Kidney (tissue), 22 donors: ENCODE measurements at regions of chr19 and their contacts with region 1.

Region 1: GRCh38 chr19:15264061-15264932 is 32.0 kb upstream of the EPHX3 start:
- DNase-seq: peak; percentile 74 to 91 (median 80)
- H3K4me3 ChIP-seq: no peak overlapping the region
- H3K27ac ChIP-seq: peak overlapping the region; percentile 33 to 72
- H3K4me1 ChIP-seq: peaks cover 0 to 15% (median 11%) of the 10 kb centered on the region in 3 donors
- H3K27me3 ChIP-seq: no peaks in the 10 kb centered on the region
- CTCF ChIP-seq: peak; percentile 77

Region 2: GRCh38 chr19:15136246-15136954 is 127.9 kb before region 1 on chr19:
- intact Hi-C with region 1: no loop called
- DNase-seq: no peak
- H3K4me3 ChIP-seq: no peak overlapping the region
- H3K27ac ChIP-seq: no peak overlapping the region
- H3K4me1 ChIP-seq: no peaks in the 10 kb centered on the region
- H3K27me3 ChIP-seq: no peaks in the 10 kb centered on the region
- CTCF ChIP-seq: no peak

Region 3: DNA sequence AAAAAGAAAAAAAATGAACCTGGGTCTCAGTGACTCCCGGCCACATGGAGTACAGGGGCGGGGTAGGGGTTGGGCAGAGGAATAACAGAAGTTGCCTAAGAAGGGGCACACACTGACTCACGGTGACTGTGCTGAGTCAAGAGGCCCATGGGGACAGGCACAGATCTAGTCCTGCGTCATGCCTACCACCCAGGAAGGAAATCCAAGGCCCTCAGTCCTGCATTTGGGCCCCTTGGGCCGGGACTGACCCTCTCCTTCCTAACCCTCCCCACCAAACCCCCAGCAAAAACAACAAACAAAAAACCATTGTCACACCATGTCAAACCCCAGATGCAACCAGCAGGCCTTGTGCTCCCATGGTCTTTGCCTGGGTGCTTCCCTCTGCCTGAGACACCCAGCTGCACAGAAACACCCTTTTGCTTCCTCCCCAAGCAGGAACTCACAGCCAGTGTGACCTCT is 53.9 kb before region 1 on chr19:
- intact Hi-C with region 1: no loop called
- DNase-seq: no peak
- H3K4me3 ChIP-seq: no peak overlapping the region
- H3K27ac ChIP-seq: no peak overlapping the region
- H3K4me1 ChIP-seq: no peaks in the 10 kb centered on the region
- H3K27me3 ChIP-seq: no peaks in the 10 kb centered on the region
- CTCF ChIP-seq: no peak

Region 4: GRCh38 chr19:15318241-15318691 is 54.0 kb after region 1 on chr19:
- intact Hi-C with region 1: no loop called
- DNase-seq: no peak
- H3K4me3 ChIP-seq: peak overlapping the region in 1 of 3 donors; percentile 10
- H3K27ac ChIP-seq: peak overlapping the region; percentile 47 to 57
- H3K4me1 ChIP-seq: peaks cover 6 to 58% (median 53%) of the 10 kb centered on the region in 3 donors
- H3K27me3 ChIP-seq: no peaks in the 10 kb centered on the region
- CTCF ChIP-seq: no peak

Region 5: GRCh38 chr19:15332311-15332996 is 68.2 kb after region 1 on chr19 and contains the start of gene BRD4:
- intact Hi-C with region 1: loop called (anchors 10 kb)
- DNase-seq: peak; percentile 68 to 94 (median 84)
- H3K4me3 ChIP-seq: peak within 1 kb of the TSS; percentile 85 to 95 (median 92)
- H3K27ac ChIP-seq: peak within 1 kb of the TSS; percentile 94 to 95
- H3K4me1 ChIP-seq: peaks cover 0 to 25% (median 13%) of the 10 kb centered on the region in 3 donors
- H3K27me3 ChIP-seq: no peaks in the 10 kb centered on the region
- CTCF ChIP-seq: no peak
- total RNA-seq, gene BRD4: 107 TPM